Activated CD8-positive, alpha-beta T cell treated with anti-CD3 and anti-CD28 coated beads for 36 hours (primary cell): ENCODE measurements at regions of chr1 and their contacts with region 1.

Region 1: GRCh38 chr1:52842643-52843309 is at the start of gene ZYG11A:
- DNase-seq: peak; percentile 80
- ATAC-seq: peak; percentile 99
- H3K4me3 Mint-ChIP-seq: peak within 1 kb of the TSS; percentile 51
- H3K27ac Mint-ChIP-seq: no peak within 1 kb of the TSS
- H3K4me1 Mint-ChIP-seq: no peaks in the 10 kb centered on the region
- H3K27me3 Mint-ChIP-seq: peaks cover 27% of the 10 kb centered on the region
- CTCF ChIP-seq: peak; percentile 53
- total RNA-seq, gene ZYG11A: 0.13 to 0.16 TPM

Region 2: GRCh38 chr1:52702886-52703787 is 139.6 kb before region 1 on chr1:
- CTCF ChIA-PET with region 1: interaction called, 4 read pairs
- POLR2A ChIA-PET with region 1: interaction called, 3 read pairs
- intact Hi-C with region 1: loop called (anchors 10 kb)
- DNase-seq: peak; percentile 90
- ATAC-seq: peak; percentile 95
- H3K4me3 Mint-ChIP-seq: peak overlapping the region; percentile 76
- H3K27ac Mint-ChIP-seq: peak overlapping the region; percentile 89
- H3K4me1 Mint-ChIP-seq: peaks cover 17% of the 10 kb centered on the region
- H3K27me3 Mint-ChIP-seq: no peaks in the 10 kb centered on the region
- CTCF ChIP-seq: no peak

Region 3: DNA sequence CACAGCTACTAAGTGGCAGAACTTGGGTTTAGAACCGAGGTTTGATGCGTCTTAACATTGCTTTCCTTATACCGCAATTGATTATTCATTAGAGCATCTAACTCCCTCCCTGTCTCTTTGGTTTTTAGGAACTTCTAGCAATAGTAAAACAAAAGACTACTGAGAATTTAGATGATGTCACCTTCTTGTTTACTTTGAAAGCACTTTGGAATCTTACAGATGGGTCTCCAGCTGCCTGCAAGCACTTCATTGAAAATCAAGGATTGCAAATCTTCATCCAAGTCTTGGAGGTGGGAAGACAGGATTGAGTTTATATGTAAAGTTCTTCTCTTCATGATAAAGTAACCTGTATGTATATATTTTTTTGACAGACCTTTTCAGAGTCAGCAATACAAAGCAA is 34.8 kb after region 1 on chr1:
- CTCF ChIA-PET with region 1: no interaction called
- POLR2A ChIA-PET with region 1: no interaction called
- intact Hi-C with region 1: no loop called
- DNase-seq: no peak
- ATAC-seq: no peak
- H3K4me3 Mint-ChIP-seq: no peak overlapping the region
- H3K27ac Mint-ChIP-seq: no peak overlapping the region
- H3K4me1 Mint-ChIP-seq: no peaks in the 10 kb centered on the region
- H3K27me3 Mint-ChIP-seq: no peaks in the 10 kb centered on the region
- CTCF ChIP-seq: no peak

Region 4: GRCh38 chr1:52914463-52914862 is 71.7 kb after region 1 on chr1:
- CTCF ChIA-PET with region 1: no interaction called
- POLR2A ChIA-PET with region 1: no interaction called
- intact Hi-C with region 1: no loop called
- DNase-seq: no peak
- ATAC-seq: no peak
- H3K4me3 Mint-ChIP-seq: no peak overlapping the region
- H3K27ac Mint-ChIP-seq: no peak overlapping the region
- H3K4me1 Mint-ChIP-seq: peaks cover 3% of the 10 kb centered on the region
- H3K27me3 Mint-ChIP-seq: no peaks in the 10 kb centered on the region
- CTCF ChIP-seq: no peak